Upper lobe of right lung (tissue), 1 donor: ENCODE measurements at regions of chr5 and their contacts with region 1.

Region 1: GRCh38 chr5:55407059-55407684 is 99.4 kb downstream of the MTREX start:
- DNase-seq: no peak
- ATAC-seq: peak; percentile 69
- H3K4me3 ChIP-seq: no peak overlapping the region
- H3K27ac ChIP-seq: no peak overlapping the region
- H3K4me1 ChIP-seq: no peaks in the 10 kb centered on the region
- H3K27me3 ChIP-seq: no peaks in the 10 kb centered on the region
- CTCF ChIP-seq: peak; percentile 62

Region 2: DNA sequence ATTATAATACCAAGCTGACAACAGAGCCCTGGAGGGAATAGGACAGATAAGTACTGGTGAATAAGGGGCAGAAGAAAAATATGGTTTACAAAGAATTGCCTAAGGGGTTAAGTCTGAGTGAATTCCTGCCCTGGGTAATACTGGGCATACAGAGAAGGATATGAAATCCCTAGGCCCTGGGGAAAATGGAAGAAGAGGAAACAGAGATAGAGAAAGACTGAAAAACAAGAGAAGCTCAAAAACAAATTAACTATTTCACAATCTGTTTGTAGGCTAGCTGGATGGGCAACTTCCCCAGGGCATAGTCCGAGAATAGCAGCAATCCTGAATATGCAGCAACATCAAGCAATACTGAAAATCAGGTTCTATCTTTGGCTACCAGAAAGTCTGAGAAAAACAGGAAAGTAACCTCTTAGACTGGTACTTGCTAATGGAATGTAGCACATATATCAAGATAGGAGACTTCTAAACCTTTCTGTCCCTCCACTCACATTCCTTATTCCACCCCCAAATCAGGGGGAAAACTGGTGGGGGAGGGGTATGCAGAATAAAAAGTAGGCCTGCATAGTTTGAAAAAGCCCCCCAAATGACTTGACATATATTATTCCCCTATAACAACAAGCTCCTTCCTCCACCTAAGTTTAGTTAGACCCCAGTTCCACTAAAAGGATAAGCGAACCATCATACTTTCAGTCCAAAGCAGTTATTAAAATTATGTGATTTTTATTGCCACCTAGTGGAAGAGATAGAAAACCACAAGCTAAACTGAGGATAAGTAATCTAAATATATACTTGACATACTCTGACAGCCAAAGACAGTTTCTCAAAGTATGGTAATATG is 284.3 kb after region 1 on chr5:
- intact Hi-C with region 1: loop called (anchors 2 kb)
- DNase-seq: no peak
- ATAC-seq: peak; percentile 72
- H3K4me3 ChIP-seq: no peak overlapping the region
- H3K27ac ChIP-seq: peak overlapping the region; percentile 53
- H3K4me1 ChIP-seq: peaks cover 7% of the 10 kb centered on the region
- H3K27me3 ChIP-seq: no peaks in the 10 kb centered on the region
- CTCF ChIP-seq: peak; percentile 72